ENCODE measurements at regions of chr1 and their contacts with region 1.

Region 1: DNA sequence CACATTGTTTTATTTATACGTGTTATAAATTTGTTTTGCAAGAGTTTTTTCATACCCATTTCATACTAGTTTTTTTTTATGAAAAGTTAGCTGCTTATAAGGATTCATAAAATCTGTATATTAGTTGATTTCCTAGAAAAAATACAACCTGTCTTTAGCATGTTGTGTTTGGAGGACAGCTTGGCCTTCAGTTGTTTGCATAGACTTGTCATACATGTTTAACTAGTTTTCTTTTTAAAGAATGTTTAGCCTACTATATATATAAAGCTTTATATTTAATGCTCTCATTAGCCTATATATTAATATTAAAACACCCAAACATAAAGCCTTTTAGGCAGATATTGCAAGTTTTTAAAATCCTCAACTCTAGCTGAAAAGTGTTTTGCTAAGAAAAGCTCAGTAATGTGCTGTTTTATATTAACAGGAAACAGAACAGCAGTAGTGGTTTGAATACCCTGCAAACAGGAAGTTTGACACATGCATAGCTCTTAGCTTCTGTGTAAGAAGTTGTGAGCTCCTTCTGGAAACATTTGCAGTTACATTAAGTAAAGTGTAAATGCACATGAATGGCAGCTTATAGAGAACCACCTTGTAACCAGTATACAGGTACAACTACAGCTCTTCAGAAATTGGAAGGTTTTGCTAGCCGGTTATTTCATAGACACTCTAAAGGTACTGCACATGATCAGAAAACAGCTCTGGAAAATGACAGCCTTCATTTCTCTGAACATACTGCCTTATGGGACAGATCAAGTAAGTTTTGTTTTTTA is at the start of gene PRKACB:
- DNase-seq: peak; percentile 72
- H3K4me3 ChIP-seq: peak within 1 kb of the TSS; percentile 3
- H3K27ac ChIP-seq: peak within 1 kb of the TSS; percentile 56
- H3K4me1 ChIP-seq: peaks cover 17% of the 10 kb centered on the region
- H3K27me3 ChIP-seq: no peaks in the 10 kb centered on the region
- CTCF ChIP-seq: no peak
- total RNA-seq, gene PRKACB: 33.6 and 39.6 TPM in 2 replicates

Region 2: GRCh38 chr1:84298328-84298683 is 154.3 kb after region 1 on chr1:
- CTCF ChIA-PET with region 1: no interaction called
- POLR2A ChIA-PET with region 1: no interaction called
- intact Hi-C with region 1: loop called (anchors 5 kb)
- DNase-seq: peak; percentile 68
- H3K4me3 ChIP-seq: peak overlapping the region; percentile 74
- H3K27ac ChIP-seq: peak overlapping the region; percentile 79
- H3K4me1 ChIP-seq: peaks cover 32% of the 10 kb centered on the region
- H3K27me3 ChIP-seq: no peaks in the 10 kb centered on the region
- CTCF ChIP-seq: no peak